ENCODE measurements at regions of chr2 and their contacts with region 1.

Region 1: DNA sequence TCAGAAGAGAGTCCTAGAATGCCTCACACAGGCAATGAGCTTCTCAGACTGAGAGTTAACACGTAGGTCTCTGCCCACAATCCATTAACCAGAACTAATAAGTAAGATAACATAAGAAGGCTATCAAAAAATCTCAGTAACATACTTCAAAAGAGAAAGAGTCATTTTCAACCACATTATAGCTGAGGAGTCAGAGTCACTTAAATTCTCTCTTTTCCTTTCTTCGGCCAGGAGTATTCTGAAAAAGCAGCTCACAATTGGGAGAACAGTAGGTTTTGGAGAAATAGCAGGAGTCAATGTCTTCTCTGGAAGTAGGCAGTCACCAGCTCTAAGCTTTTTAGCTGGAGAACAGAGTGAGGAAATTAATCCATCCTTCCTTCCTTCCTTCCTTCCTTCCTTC is 1364.4 kb upstream of the NXPH2 start:
- DNase-seq: peak; percentile 97
- H3K4me3 ChIP-seq: peak overlapping the region; percentile 21
- H3K27ac ChIP-seq: peak overlapping the region; percentile 98
- H3K4me1 ChIP-seq: peaks cover 46% of the 10 kb centered on the region
- H3K27me3 ChIP-seq: no peaks in the 10 kb centered on the region
- CTCF ChIP-seq: no peak

Region 2: DNA sequence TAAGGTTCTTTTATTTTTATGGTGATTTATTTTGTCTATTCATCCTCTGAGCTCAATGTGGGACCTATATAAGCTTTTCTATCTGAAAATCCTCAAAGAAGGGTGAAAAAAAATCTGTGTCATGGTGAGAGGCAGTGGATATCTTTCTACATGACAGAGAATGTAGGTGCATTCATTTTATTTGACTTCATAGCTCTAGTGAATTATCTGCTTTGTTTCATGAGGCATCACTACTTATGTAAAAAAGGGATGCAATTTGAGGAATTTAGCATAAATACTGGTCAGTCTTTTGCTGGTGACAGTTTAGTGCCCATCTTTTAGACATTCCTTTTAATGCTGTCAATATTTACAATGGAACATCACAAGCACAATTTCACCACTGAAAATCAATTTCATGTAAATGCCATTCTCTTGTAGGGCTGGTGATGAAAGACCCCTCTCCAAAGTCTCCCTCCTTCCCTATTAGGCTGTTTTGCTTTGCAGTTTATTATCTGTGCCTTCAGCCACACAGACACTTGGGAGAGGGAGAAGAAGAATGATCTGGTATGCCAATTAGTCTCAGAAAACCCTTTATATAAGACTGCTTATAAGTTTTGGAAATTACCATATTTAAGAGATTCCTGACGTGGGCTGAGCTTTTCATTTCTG is 1216.1 kb before region 1 on chr2:
- CTCF ChIA-PET with region 1: no interaction called
- POLR2A ChIA-PET with region 1: no interaction called
- intact Hi-C with region 1: loop called (anchors 5 kb)
- DNase-seq: peak; percentile 67
- H3K4me3 ChIP-seq: no peak overlapping the region
- H3K27ac ChIP-seq: peak overlapping the region; percentile 18
- H3K4me1 ChIP-seq: peaks cover 31% of the 10 kb centered on the region
- H3K27me3 ChIP-seq: no peaks in the 10 kb centered on the region
- CTCF ChIP-seq: no peak

Region 3: GRCh38 chr2:139916822-139917221 is 227.8 kb before region 1 on chr2:
- CTCF ChIA-PET with region 1: no interaction called
- POLR2A ChIA-PET with region 1: no interaction called
- intact Hi-C with region 1: loop called (anchors 10 kb)
- DNase-seq: peak; percentile 65
- H3K4me3 ChIP-seq: no peak overlapping the region
- H3K27ac ChIP-seq: no peak overlapping the region
- H3K4me1 ChIP-seq: no peaks in the 10 kb centered on the region
- H3K27me3 ChIP-seq: no peaks in the 10 kb centered on the region
- CTCF ChIP-seq: peak; percentile 58

Region 4: GRCh38 chr2:140863713-140864112 is 719.1 kb after region 1 on chr2:
- CTCF ChIA-PET with region 1: no interaction called
- POLR2A ChIA-PET with region 1: no interaction called
- intact Hi-C with region 1: loop called (anchors 2 kb)
- DNase-seq: peak; percentile 79
- H3K4me3 ChIP-seq: no peak overlapping the region
- H3K27ac ChIP-seq: no peak overlapping the region
- H3K4me1 ChIP-seq: peaks cover 9% of the 10 kb centered on the region
- H3K27me3 ChIP-seq: no peaks in the 10 kb centered on the region
- CTCF ChIP-seq: peak; percentile 67

Region 5: DNA sequence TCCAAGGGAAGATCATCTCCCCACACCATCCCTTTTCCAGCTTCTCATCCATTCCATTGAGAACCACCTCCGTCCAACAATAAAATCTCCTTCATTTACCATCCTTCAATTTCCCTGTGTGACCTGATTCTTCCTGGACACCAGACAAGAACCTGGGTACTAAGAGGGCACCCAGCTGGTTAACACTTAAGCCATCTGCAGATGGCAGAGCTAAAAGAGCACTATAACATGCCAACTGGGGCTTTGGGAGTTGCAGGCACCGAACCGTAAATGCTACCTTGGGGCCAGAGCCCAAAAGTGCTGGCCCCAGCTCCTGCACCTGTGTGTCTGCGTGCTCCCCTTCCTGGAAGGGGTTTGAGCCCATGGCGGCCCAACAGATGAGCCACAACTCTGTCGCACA is 1331.2 kb after region 1 on chr2:
- CTCF ChIA-PET with region 1: no interaction called
- POLR2A ChIA-PET with region 1: no interaction called
- intact Hi-C with region 1: loop called (anchors 2 kb)
- DNase-seq: no peak
- H3K4me3 ChIP-seq: no peak overlapping the region
- H3K27ac ChIP-seq: no peak overlapping the region
- H3K4me1 ChIP-seq: peaks cover 14% of the 10 kb centered on the region
- H3K27me3 ChIP-seq: no peaks in the 10 kb centered on the region
- CTCF ChIP-seq: no peak

Measured in A673 (cell line).